ENCODE measurements at regions of chr12 and their contacts with region 1.

Region 1: DNA sequence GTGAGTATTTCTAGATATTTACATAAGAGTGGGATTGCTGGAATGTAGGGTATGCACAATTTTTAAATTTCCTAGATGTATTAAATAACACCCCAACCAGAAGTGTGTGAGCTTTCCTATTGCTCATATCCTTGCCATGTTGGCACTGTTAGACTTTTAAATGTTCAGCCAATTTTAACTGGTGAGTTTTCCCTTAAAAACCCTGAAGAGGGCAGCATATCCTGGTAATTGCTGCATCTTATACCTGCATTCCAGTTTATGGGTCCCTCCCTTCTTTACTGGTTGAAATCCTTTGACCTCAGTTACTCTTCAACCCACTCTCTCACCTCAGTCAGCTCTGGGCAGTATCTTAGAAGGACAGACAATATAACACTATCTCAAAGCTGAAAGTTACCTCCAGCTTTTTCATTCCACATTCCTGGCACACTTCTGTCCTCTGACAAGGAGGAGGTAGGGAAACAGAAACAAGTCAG is 270.6 kb downstream of the PAWR start:
- DNase-seq: peak; percentile 38 to 82
- ATAC-seq: peak; percentile 63 to 69; a peak in 5 of 6 replicates
- H3K4me3 ChIP-seq: no peak overlapping the region
- H3K27ac ChIP-seq: peak overlapping the region; percentile 35 to 77
- H3K4me1 ChIP-seq: peaks cover 62% of the 10 kb centered on the region
- CTCF ChIP-seq: peak; percentile 81
- EP300 ChIP-seq: no peak
- POLR2A ChIP-seq: no peak
- RAD21 ChIP-seq: peak; percentile 89 to 95

Region 2: DNA sequence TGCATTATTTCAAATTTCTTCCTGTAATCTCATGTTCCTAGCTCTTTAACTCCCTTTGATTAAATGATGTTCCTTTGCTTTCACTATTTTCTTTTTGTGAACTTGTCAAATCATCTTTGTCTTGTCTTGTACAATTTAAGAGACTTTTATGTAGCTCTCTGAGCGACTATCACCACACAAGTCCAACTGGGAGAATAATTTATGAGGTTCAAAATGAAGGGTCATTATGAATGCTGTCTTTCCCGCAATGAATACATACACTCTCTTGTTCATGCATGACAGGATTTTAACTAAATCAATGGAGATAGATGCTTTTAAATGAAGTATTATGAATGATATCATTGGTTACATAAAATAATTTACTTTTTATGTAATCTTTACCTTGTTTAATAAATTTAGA is 136.8 kb before region 1 on chr12:
- CTCF ChIA-PET with region 1: no interaction called
- POLR2A ChIA-PET with region 1: no interaction called
- DNase-seq: no peak
- ATAC-seq: no peak
- H3K4me3 ChIP-seq: no peak overlapping the region
- H3K27ac ChIP-seq: no peak overlapping the region
- H3K4me1 ChIP-seq: no peaks in the 10 kb centered on the region
- CTCF ChIP-seq: no peak
- EP300 ChIP-seq: no peak
- POLR2A ChIP-seq: no peak
- RAD21 ChIP-seq: no peak

Region 3: DNA sequence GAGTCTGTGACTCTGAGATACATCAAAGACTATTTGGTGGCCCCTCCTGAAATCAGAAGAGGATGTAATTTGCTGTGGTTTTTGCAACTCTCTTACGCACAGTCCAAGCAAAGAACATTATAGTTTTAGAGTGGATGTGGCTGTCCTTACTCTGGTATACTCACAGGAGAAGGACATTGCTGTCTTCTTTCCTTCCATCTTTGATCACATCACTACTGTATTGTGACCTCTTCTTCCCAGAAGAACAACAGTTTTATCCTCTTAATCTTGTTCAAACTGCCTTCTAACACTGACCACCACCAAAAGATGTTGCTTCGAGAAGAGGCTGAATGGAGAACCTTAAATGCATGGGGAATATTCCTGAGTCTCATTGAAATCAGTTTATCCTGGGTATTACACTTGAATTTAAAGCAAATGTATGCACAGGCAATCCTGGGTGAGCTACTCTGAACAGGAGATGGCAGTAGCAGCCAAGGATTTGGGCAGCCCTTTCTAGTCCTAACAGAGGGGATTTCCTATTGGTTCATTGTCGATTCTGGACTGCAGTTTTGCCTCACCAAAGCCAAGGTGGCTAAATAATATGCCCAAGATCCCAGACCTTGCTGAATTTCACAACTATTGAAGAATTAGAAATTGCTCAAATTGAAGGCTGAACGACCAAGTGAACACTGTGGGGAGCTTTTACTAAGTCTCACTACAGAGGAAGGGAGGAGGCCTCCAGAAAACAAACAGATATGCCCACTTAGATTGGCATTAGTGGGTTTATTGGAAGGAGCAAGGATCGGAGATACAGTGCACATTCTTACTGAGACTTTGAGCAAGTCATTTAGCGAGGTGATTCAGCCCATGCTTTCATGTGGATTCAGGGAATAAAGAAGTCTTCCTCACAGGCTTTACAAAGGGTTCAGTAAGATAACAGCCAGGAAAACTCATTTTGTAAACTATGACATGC is 12.2 kb before region 1 on chr12:
- CTCF ChIA-PET with region 1: interaction called, 22 read pairs
- POLR2A ChIA-PET with region 1: interaction called, 3 read pairs
- DNase-seq: peak; percentile 50 to 85
- ATAC-seq: peak; percentile 99 to 100
- H3K4me3 ChIP-seq: no peak overlapping the region
- H3K27ac ChIP-seq: peak overlapping the region; percentile 21 to 76; a peak in 5 of 6 replicates
- H3K4me1 ChIP-seq: peaks cover 30% of the 10 kb centered on the region
- CTCF ChIP-seq: peak; percentile 89
- EP300 ChIP-seq: no peak
- POLR2A ChIP-seq: no peak
- RAD21 ChIP-seq: peak; percentile 93 to 99

Region 4: DNA sequence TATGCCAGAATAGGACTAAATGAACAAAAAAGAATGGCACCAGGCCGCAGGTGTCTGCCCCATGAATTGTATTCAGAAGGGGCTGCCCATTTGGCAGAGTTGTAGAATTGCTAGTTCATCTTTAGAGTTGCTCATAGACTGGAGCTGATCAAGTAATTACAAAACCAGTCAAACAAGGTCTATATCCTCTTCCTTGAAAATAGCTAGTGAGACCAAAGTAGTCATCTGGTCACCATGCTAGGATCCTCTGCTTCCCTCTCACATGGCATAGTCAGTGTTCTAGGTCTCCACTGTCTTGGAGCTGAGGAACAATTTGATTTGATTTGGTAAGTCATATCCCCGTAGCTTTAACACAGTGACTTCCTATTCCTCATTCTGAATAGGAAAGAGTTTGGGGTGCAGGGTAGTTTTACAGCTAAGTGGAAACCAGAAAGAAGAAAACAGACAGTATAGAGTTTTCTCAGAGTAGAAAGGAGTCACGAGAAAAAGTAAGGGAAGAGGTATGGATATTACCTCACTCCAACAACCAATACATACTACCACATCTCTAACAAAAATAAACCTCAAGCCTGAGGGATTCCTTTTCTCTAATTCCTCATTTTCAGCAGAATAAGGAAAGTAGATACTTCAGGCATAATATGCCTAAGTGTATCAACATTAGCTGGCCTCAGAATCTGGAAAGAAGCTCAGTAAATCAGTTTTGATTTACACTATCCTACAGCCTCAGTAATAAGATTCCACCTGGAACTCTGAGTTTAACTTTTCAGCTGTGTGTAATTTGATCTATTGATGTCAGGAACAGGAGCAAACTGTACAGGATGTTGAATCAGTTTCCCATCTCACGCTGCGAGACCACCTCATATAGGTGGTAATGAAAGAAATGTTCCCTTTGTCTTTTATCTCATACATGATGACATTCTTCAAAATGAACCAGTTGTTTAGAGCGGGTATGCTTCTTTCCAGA is 18.6 kb after region 1 on chr12:
- CTCF ChIA-PET with region 1: interaction called, 12 read pairs
- POLR2A ChIA-PET with region 1: no interaction called
- DNase-seq: no peak
- ATAC-seq: no peak
- H3K4me3 ChIP-seq: no peak overlapping the region
- H3K27ac ChIP-seq: no peak overlapping the region
- H3K4me1 ChIP-seq: peaks cover 27% of the 10 kb centered on the region
- CTCF ChIP-seq: no peak
- EP300 ChIP-seq: no peak
- POLR2A ChIP-seq: no peak
- RAD21 ChIP-seq: no peak

Region 5: DNA sequence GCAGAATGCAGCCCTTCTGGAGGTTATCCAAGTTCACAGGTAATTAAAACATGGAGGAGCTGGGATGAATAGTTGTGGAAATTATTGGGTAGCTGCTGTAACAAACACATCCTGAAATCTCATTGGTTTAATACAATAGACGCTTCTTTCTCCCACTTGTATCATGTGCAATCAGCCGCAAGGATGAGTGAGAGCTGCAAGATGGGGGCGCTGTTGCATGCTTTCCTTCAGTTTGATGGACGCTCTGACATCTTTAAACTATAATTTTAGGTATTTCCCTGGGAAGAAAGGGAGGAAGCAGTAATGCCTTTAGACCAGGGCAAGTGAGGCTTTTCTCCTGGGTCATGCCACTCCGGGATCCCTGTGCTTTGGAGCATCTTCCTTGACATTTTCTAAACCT is 91.9 kb after region 1 on chr12:
- CTCF ChIA-PET with region 1: no interaction called
- POLR2A ChIA-PET with region 1: no interaction called
- DNase-seq: peak in 1 of 2 experiments; percentile 34
- ATAC-seq: peak in 1 of 2 experiments; percentile 62; a peak in 3 of 6 replicates
- H3K4me3 ChIP-seq: no peak overlapping the region
- H3K27ac ChIP-seq: 0 out of 6 replicates have a peak overlapping the region, but pooled peaks of 1 of the 2 experiments have one; percentile 30
- H3K4me1 ChIP-seq: no peaks in the 10 kb centered on the region
- CTCF ChIP-seq: peak; percentile 21; the same call in 2 of the 3 replicates
- EP300 ChIP-seq: no peak
- POLR2A ChIP-seq: no peak
- RAD21 ChIP-seq: peak in 1 of 2 experiments; percentile 23; a peak in 1 of 5 replicates

Region 6: DNA sequence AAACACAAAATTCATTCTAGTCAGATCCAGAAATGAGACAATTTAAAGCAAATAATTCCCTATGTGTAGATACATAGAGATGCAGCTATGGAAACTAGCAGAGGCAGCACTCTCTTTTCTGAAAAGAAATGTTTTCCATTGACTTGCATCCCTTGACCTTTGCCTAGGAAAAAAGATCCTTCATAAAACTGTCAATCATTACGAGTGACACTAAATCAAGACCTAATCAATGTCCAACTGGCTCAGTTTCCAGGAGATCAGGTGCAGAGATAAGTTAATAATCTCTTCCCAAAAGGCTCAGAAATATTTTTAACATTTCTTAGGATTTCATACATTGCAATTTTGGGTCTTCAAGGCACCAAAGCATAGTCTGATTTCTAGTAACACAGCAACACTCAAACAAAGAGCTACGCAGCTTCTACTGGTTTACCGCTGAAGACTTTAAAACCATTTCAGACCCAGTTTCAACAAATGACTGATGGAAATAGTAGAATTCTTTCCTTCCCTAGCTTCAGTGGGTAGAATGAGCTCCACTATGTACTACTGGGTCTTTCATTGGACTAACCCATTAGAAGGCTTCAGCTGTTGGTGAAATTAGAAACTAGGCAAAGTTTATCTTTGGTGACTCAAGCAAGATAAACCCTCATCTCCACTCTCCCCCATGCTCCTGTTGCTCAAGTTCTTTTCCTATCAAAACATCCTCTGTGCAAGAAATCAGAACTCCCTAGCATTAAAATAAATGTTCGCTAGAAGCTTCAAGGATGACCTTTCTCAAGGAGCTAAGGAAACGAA is 111.1 kb after region 1 on chr12:
- CTCF ChIA-PET with region 1: interaction called, 11 read pairs
- POLR2A ChIA-PET with region 1: no interaction called
- DNase-seq: peak in 1 of 2 experiments; percentile 41
- ATAC-seq: peak in 1 of 2 experiments; percentile 64; a peak in 3 of 6 replicates
- H3K4me3 ChIP-seq: no peak overlapping the region
- H3K27ac ChIP-seq: peak overlapping the region in 1 of 2 experiments; percentile 51; a peak in 4 of 6 replicates
- H3K4me1 ChIP-seq: peaks cover 54% of the 10 kb centered on the region
- CTCF ChIP-seq: no peak
- EP300 ChIP-seq: no peak
- POLR2A ChIP-seq: no peak
- RAD21 ChIP-seq: no peak

Region 7: DNA sequence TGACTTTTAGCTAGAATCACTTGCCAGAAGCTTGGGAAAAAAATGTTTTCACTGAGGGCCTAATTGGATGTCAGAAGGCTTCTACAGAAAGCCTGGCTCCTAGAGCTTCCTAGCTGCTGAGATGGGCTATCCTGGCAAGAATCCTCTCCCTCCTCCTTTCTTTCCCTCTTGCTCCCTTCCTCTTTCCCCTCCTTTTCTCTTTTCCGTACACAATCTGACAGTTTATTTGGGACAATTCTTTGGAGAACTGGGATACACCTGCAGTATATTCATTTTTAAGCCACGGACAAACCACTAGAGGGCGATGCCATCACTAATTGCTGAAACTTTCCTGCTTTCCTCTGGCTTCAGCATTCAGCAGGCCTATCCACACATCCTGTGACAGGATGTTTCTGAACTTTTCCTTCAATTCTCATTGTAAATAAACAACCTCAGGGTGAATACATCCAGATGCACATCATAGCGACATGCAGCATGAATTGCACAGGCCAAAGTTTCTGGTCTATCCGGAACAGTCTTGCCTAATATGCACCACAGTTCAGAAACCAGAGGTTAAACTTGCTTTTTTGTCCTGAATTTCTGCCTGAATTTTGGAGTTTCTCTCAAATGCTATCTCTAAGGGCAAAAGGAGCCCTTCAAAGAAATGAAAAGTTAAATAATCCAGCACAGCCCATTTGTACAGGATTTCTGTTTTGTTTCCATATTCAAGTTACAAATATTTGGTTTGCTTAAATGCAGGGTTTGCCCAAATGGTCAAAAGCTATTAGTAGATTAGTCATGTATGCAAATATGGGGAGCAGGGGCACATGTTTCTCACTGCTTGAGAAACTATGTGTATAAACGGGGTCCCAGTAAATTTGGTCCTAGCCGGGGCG is 127.8 kb after region 1 on chr12:
- CTCF ChIA-PET with region 1: interaction called, 25 read pairs
- POLR2A ChIA-PET with region 1: interaction called, 8 read pairs
- DNase-seq: peak; percentile 66 to 84
- ATAC-seq: peak; percentile 75; a peak in 5 of 6 replicates
- H3K4me3 ChIP-seq: 0 out of 3 replicates have a peak overlapping the region, but pooled peaks have one; percentile 10
- H3K27ac ChIP-seq: peak overlapping the region; percentile 83 to 88
- H3K4me1 ChIP-seq: peaks cover 56% of the 10 kb centered on the region
- CTCF ChIP-seq: peak; percentile 82
- EP300 ChIP-seq: no peak
- POLR2A ChIP-seq: no peak
- RAD21 ChIP-seq: peak; percentile 72 to 73

Region 8: GRCh38 chr12:79737875-79738718 is 317.9 kb after region 1 on chr12:
- CTCF ChIA-PET with region 1: interaction called, 18 read pairs
- POLR2A ChIA-PET with region 1: no interaction called
- DNase-seq: peak; percentile 52 to 79
- ATAC-seq: peak; percentile 76 to 91
- H3K4me3 ChIP-seq: no peak overlapping the region
- H3K27ac ChIP-seq: peak overlapping the region; percentile 12 to 48; a peak in 4 of 6 replicates
- H3K4me1 ChIP-seq: peaks cover 8% of the 10 kb centered on the region; the same call in 1 of the 3 replicates
- CTCF ChIP-seq: peak; percentile 88
- EP300 ChIP-seq: no peak
- POLR2A ChIP-seq: no peak
- RAD21 ChIP-seq: peak; percentile 89 to 90

Measured in A549 (cell line).